Transverse colon (tissue), 4 donors: ENCODE measurements at regions of chr21 and their contacts with region 1.

Region 1: GRCh38 chr21:42913476-42913875 is 12.0 kb downstream of the ERVH48-1 start:
- DNase-seq: no peak
- H3K4me3 ChIP-seq: no peak overlapping the region
- H3K27ac ChIP-seq: no peak overlapping the region
- H3K4me1 ChIP-seq: no peaks in the 10 kb centered on the region
- H3K27me3 ChIP-seq: no peaks in the 10 kb centered on the region
- CTCF ChIP-seq: no peak
- EP300 ChIP-seq: no peak
- POLR2A ChIP-seq: no peak

Region 2: DNA sequence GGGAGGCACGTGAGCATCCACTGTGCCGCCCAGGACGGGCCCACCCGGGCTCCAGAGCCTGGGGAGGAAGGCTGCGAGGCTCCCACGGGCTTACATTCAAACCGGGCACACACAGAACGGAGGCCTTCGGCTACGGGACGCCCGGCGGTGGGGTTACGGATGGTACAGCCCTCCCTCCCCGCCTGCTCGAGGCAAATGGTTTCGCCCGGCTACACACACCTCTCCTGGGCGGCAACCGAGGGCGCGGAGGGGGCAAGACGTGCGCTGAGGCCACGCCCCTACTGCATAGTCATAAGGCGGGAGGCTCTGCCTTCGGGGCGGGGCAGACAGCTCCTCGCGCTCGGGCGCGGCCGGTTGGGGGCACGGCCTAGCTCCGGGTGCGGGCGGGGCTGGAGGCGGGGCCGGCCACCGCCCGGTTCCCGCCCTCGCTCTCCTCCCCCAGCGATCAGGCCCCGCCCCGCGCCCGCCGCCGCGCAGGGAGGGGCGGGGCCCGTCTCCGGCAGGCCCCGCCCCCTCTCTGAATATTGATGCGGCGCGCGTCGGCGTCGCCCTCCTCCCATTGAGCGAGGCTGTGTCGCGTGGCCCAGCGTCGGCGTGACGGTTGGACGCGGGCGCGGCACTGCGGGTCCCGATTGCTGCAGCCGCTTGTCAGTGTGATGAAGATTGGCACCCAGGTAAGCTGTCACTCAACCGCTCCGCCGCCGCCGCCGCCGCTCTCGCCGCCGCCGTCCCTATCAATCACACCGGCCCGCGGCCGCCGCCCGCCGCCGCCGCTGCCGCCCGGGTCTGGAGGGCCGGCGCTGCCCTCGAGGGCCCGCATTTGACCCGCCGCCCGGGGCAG is 60.7 kb after region 1 on chr21 and contains the start of gene PKNOX1:
- in situ Hi-C with region 1: loop called in 1 of 4 experiments (anchors 10 kb)
- intact Hi-C with region 1: no loop called
- DNase-seq: peak; percentile 99
- H3K4me3 ChIP-seq: peak within 1 kb of the TSS; percentile 55 to 96 (median 84)
- H3K27ac ChIP-seq: peak within 1 kb of the TSS; percentile 98 to 100 (median 100)
- H3K4me1 ChIP-seq: peaks cover 10 to 29% (median 17%) of the 10 kb centered on the region in 4 donors
- H3K27me3 ChIP-seq: no peaks in the 10 kb centered on the region
- CTCF ChIP-seq: peak in 2 of 5 experiments; percentile 56 to 73
- EP300 ChIP-seq: no peak
- POLR2A ChIP-seq: peak; percentile 41
- total RNA-seq, gene PKNOX1: 9.4 to 140 (median 25.1) TPM

Region 3: DNA sequence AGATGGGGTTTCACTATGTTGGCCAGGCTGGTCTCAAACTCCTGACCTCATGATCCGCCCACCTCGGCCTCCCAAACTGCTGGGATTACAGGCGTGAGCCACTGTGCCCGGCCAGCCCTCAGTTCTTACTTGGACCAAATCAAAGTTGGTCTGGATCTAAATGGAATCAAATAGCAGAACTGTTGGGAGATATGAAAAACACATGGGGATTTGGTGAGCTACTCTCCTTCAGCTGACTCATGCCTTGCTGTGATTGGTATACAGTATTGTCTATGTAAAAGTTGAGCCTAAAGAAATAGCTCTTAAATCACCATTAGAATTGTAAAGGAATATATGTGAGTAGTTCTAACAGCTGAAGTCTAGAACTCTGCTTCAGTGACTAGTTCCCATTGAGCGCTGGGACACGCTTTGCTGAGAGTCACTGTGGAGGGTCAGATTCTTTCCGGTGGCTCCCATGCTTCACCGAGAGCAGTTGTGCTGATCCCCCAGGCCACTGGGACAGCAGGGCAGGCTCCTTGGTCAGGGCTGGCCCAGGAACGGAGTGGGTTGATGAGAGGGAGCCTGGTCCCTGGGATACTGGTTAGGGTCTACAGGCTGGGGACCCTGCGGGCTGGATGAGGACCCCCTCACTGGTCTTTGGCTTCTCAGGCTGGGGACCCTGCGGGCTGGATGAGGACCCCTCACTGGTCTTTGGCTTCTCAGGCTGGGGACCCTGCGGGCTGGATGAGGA is 74.9 kb after region 1 on chr21:
- in situ Hi-C with region 1: loop called in 1 of 4 experiments (anchors 10 kb)
- intact Hi-C with region 1: no loop called
- DNase-seq: no peak
- H3K4me3 ChIP-seq: no peak overlapping the region
- H3K27ac ChIP-seq: no peak overlapping the region
- H3K4me1 ChIP-seq: peaks cover 0 to 11% (median 3%) of the 10 kb centered on the region in 4 donors
- H3K27me3 ChIP-seq: no peaks in the 10 kb centered on the region
- CTCF ChIP-seq: no peak
- EP300 ChIP-seq: no peak
- POLR2A ChIP-seq: no peak